ENCODE measurements at regions of chr6 and their contacts with region 1.

Region 1: GRCh38 chr6:158853072-158853871 is 34.1 kb upstream of the EZR start:
- DNase-seq: peak; percentile 98
- ATAC-seq: peak; percentile 69
- H3K4me3 ChIP-seq: peak overlapping the region; percentile 26; the same call in 1 of the 2 replicates
- H3K27ac ChIP-seq: peak overlapping the region; percentile 99
- H3K4me1 ChIP-seq: peaks cover 61% of the 10 kb centered on the region
- H3K27me3 ChIP-seq: no peaks in the 10 kb centered on the region
- CTCF ChIP-seq: no peak

Region 2: GRCh38 chr6:158475344-158476302 is 377.6 kb before region 1 on chr6:
- CTCF ChIA-PET with region 1: no interaction called
- POLR2A ChIA-PET with region 1: no interaction called
- intact Hi-C with region 1: no loop called
- DNase-seq: peak; percentile 67
- ATAC-seq: peak; percentile 81
- H3K4me3 ChIP-seq: peak overlapping the region; percentile 51
- H3K27ac ChIP-seq: peak overlapping the region; percentile 99
- H3K4me1 ChIP-seq: peaks cover 31% of the 10 kb centered on the region
- H3K27me3 ChIP-seq: no peaks in the 10 kb centered on the region
- CTCF ChIP-seq: no peak

Region 3: DNA sequence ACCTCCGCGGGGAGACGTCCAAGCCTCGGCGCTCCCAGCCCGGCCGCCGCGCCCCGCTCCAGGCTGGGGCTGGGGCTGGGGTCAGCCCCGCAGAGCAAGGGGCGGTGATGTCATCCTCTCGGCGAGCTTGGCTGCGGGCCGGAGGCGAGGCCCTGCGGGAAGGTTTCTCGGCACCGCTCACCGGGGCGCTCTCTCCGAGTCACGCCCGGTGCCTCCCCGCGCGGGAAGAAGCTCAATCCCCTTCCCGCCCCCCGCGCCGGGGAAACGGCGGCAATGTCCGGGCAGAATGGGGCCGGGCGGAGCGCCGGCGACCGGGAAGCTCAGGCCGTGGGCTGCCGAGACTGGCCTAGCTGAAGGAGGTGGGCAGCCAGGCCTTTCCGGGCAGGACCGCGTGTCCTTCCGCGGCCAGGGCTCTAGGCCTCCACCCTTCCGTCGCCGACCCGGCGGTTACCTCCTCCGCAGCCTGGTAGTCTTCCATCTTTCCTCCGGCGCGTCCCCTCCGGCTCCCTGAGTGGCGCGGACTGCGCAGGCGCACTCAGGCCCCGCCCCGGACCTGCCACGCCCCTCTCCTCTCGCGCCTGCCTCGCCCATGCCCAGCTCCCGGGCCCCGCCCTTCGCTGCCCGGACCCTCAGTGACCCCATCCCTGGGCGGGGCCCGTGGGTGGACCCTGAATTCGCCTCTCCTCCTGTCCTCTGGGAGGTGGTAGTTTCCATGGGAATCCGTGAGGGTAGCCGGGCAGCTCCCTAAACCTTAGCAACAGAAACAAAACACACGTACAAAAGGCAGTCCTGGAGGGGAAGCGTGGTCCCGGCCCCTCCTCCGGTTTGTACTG is 208.8 kb before region 1 on chr6 and contains the start of gene DYNLT1:
- CTCF ChIA-PET with region 1: no interaction called
- POLR2A ChIA-PET with region 1: no interaction called
- intact Hi-C with region 1: loop called (anchors 5 kb)
- DNase-seq: peak; percentile 88
- ATAC-seq: peak; percentile 63
- H3K4me3 ChIP-seq: peak within 1 kb of the TSS; percentile 96
- H3K27ac ChIP-seq: peak within 1 kb of the TSS; percentile 93
- H3K4me1 ChIP-seq: peaks cover 53% of the 10 kb centered on the region
- H3K27me3 ChIP-seq: no peaks in the 10 kb centered on the region
- CTCF ChIP-seq: no peak
- total RNA-seq, gene DYNLT1: 35.0 and 50.5 TPM in 2 replicates

Region 4: DNA sequence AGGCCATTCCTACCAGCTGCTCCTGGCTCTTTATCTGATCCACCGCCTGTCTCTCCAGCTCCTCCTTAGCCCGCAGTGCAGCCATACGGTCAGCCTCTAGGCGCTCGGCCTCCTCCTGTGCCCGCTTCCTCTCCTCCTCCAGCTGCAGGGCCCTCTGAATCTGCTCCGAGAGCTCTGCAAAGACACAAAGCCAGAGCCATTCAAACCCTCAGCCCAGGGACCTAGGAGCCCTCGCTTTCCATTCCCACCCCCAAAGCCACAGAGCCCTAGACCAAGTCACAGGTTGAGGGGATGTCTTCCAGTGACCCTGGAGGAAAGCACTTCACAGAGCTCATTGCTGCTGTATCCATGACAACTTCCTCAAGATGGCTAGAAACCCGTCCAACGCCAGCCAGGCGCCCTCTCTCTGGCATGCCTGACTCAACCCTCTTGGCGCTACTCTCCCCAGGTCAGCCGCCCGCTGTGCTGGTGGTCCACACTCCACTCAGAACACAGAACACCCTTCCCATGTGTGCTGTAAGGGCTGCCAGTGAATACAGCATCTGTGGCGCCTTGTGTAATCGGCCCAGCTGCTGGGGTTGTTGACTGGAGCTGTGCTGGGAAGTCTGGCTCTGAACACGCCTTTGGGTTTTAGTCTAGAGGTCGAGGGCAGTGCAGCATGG is 83.4 kb before region 1 on chr6:
- CTCF ChIA-PET with region 1: no interaction called
- POLR2A ChIA-PET with region 1: no interaction called
- intact Hi-C with region 1: no loop called
- DNase-seq: no peak
- ATAC-seq: no peak
- H3K4me3 ChIP-seq: no peak overlapping the region
- H3K27ac ChIP-seq: no peak overlapping the region
- H3K4me1 ChIP-seq: no peaks in the 10 kb centered on the region
- H3K27me3 ChIP-seq: no peaks in the 10 kb centered on the region
- CTCF ChIP-seq: no peak

Region 5: GRCh38 chr6:158819213-158819909 is 33.9 kb before region 1 on chr6 and contains the start of gene EZR:
- CTCF ChIA-PET with region 1: no interaction called
- POLR2A ChIA-PET with region 1: interaction called, 8 read pairs
- intact Hi-C with region 1: loop called (anchors 1 kb)
- DNase-seq: peak; percentile 81
- ATAC-seq: peak; percentile 70
- H3K4me3 ChIP-seq: peak within 1 kb of the TSS; percentile 77
- H3K27ac ChIP-seq: peak within 1 kb of the TSS; percentile 70
- H3K4me1 ChIP-seq: peaks cover 22% of the 10 kb centered on the region
- H3K27me3 ChIP-seq: no peaks in the 10 kb centered on the region
- CTCF ChIP-seq: no peak
- total RNA-seq, gene EZR: 182 and 200 TPM in 2 replicates

Region 6: GRCh38 chr6:158869826-158870648 is 16.8 kb after region 1 on chr6:
- CTCF ChIA-PET with region 1: interaction called, 3 read pairs
- POLR2A ChIA-PET with region 1: interaction called, 17 read pairs
- intact Hi-C with region 1: loop called (anchors 1 kb)
- DNase-seq: peak; percentile 97
- ATAC-seq: peak; percentile 92
- H3K4me3 ChIP-seq: peak overlapping the region; percentile 26; the same call in 1 of the 2 replicates
- H3K27ac ChIP-seq: peak overlapping the region; percentile 93
- H3K4me1 ChIP-seq: peaks cover 19% of the 10 kb centered on the region
- H3K27me3 ChIP-seq: no peaks in the 10 kb centered on the region
- CTCF ChIP-seq: 0 out of 2 replicates have a peak, but pooled peaks have one; percentile 14

Region 7: GRCh38 chr6:158910484-158911348 is 57.4 kb after region 1 on chr6:
- CTCF ChIA-PET with region 1: no interaction called
- POLR2A ChIA-PET with region 1: no interaction called
- intact Hi-C with region 1: loop called (anchors 10 kb)
- DNase-seq: peak; percentile 80
- ATAC-seq: peak; percentile 71
- H3K4me3 ChIP-seq: peak overlapping the region; percentile 62
- H3K27ac ChIP-seq: peak overlapping the region; percentile 86
- H3K4me1 ChIP-seq: peaks cover 41% of the 10 kb centered on the region
- H3K27me3 ChIP-seq: no peaks in the 10 kb centered on the region
- CTCF ChIP-seq: no peak

Region 8: GRCh38 chr6:159042003-159042825 is 188.9 kb after region 1 on chr6:
- CTCF ChIA-PET with region 1: no interaction called
- POLR2A ChIA-PET with region 1: interaction called, 10 read pairs
- intact Hi-C with region 1: no loop called
- DNase-seq: peak; percentile 84
- ATAC-seq: peak; percentile 84
- H3K4me3 ChIP-seq: 0 out of 2 replicates have a peak overlapping the region, but pooled peaks have one; percentile 22
- H3K27ac ChIP-seq: no peak overlapping the region
- H3K4me1 ChIP-seq: peaks cover 25% of the 10 kb centered on the region
- H3K27me3 ChIP-seq: peaks cover 23% of the 10 kb centered on the region; the same call in 1 of the 2 replicates
- CTCF ChIP-seq: peak; percentile 94